ENCODE measurements at regions of chr20 and their contacts with region 1.

Region 1: DNA sequence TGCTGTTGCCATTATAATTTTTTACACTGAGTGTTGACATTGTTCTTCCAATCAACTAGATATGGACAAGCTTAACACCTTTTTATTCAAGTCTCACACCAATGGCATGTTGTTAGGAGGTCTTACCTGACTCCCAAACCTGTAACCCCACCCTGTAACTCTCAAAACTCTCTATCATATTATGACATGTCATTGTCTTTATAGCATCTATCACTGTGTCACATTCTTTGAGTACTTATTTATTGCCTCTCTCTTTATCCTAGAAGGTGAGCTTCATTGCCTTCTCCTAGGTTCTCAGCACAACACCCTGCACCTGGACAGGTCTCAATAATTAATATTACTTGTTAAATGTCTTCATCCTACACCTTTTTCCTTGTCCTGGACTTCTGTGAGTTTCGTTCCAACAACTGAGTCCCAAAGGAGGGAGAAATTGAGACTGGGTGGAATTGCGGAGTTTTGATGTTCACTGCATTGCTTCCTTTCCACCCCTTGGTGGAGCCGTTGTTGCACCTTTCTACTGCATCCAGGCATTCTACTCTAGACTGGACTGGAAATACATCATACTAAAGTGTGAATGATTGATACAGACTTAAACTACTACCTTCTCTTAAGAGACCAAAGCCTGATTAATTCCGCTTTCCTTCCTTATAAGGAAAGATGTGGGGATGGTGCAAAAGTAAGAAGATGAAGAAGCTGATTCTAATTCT is 338.0 kb upstream of the CHD6 start:
- DNase-seq: peak; percentile 7
- ATAC-seq: no peak
- H3K4me3 Mint-ChIP-seq: no peak overlapping the region
- H3K27ac Mint-ChIP-seq: no peak overlapping the region
- H3K4me1 Mint-ChIP-seq: no peaks in the 10 kb centered on the region
- H3K27me3 Mint-ChIP-seq: peaks cover 7% of the 10 kb centered on the region

Region 2: DNA sequence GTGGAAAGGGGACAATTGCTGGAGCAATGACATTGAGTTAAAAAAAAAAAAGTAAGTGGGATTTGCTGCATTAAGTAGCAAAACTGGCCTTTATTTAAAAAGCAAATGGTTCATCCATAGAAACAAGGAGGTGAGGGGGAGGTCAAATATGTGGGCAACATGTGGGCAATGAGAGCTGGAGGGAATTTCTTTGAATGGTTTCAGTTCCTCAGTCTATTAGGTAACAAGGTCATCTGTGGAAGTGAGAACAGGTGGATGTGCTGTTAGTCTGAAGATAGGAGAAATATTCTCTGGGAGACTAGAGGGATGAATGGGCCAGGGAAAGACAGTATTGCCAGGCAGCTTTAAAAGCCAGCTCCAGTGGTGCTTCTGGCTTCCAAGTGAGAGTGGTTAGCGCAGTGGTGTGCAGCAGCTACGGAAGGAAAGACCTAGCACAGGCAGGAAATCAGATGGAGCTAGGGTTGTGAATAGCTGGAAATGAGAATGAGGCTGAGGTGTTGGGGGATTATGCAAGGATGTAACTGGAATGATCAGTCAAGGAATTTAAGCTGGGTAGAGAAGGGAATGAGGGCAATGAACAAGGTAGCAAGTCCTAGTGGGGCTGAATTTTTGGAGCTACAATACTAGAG is 505.9 kb after region 1 on chr20:
- CTCF ChIA-PET with region 1: no interaction called
- POLR2A ChIA-PET with region 1: no interaction called
- intact Hi-C with region 1: no loop called
- DNase-seq: no peak
- ATAC-seq: no peak
- H3K4me3 Mint-ChIP-seq: no peak overlapping the region
- H3K27ac Mint-ChIP-seq: no peak overlapping the region
- H3K4me1 Mint-ChIP-seq: no peaks in the 10 kb centered on the region
- H3K27me3 Mint-ChIP-seq: peaks cover 5% of the 10 kb centered on the region

Region 3: GRCh38 chr20:42530822-42531448 is 574.8 kb after region 1 on chr20:
- CTCF ChIA-PET with region 1: no interaction called
- POLR2A ChIA-PET with region 1: no interaction called
- intact Hi-C with region 1: loop called in 1 of 2 experiments (anchors 5 kb)
- DNase-seq: peak; percentile 8
- ATAC-seq: no peak
- H3K4me3 Mint-ChIP-seq: no peak overlapping the region
- H3K27ac Mint-ChIP-seq: no peak overlapping the region
- H3K4me1 Mint-ChIP-seq: no peaks in the 10 kb centered on the region
- H3K27me3 Mint-ChIP-seq: peaks cover 6% of the 10 kb centered on the region

Region 4: GRCh38 chr20:42749556-42749955 is 793.4 kb after region 1 on chr20:
- CTCF ChIA-PET with region 1: no interaction called
- POLR2A ChIA-PET with region 1: no interaction called
- intact Hi-C with region 1: no loop called
- DNase-seq: no peak
- ATAC-seq: no peak
- H3K4me3 Mint-ChIP-seq: no peak overlapping the region
- H3K27ac Mint-ChIP-seq: no peak overlapping the region
- H3K4me1 Mint-ChIP-seq: no peaks in the 10 kb centered on the region
- H3K27me3 Mint-ChIP-seq: no peaks in the 10 kb centered on the region

Region 5: DNA sequence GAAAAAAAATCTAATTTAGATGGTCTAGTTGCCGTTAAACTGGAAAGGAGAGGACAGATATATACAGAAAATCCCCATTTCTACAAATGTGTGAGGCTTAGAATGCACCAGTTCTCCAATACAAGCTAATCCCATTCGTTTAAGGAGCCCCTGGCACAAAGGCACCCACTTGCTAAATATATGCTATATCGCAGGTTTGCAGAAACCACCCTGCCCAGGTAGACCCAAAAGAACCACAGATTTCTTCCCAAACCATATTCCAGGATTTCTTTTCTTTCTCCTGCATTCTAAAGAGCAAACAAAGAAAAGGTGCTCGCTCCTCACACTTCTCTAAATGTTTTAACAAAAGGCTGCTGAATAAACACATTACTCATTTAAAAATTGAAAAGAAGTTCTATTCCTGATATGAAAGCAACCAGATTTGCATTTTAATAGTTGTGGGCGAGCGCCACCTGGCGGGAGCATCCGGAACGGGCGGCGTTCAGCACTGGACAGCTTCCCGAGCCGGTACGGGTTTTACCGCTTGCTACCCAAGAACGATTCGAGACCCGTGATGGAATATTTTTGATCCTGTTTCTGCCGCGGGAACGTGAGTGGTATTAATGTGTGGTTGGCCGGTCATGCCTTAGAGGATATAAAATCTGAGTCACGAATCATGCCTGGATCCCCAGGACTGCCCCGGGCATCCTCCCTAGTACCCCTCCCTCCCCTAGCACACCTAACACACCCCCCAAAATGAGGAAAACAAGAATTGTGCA is 1231.5 kb after region 1 on chr20:
- CTCF ChIA-PET with region 1: no interaction called
- POLR2A ChIA-PET with region 1: no interaction called
- intact Hi-C with region 1: loop called (anchors 1 to 10 kb)
- DNase-seq: peak; percentile 83
- ATAC-seq: peak; percentile 42
- H3K4me3 Mint-ChIP-seq: no peak overlapping the region
- H3K27ac Mint-ChIP-seq: no peak overlapping the region
- H3K4me1 Mint-ChIP-seq: peaks cover 4% of the 10 kb centered on the region
- H3K27me3 Mint-ChIP-seq: peaks cover 43% of the 10 kb centered on the region

Region 6: DNA sequence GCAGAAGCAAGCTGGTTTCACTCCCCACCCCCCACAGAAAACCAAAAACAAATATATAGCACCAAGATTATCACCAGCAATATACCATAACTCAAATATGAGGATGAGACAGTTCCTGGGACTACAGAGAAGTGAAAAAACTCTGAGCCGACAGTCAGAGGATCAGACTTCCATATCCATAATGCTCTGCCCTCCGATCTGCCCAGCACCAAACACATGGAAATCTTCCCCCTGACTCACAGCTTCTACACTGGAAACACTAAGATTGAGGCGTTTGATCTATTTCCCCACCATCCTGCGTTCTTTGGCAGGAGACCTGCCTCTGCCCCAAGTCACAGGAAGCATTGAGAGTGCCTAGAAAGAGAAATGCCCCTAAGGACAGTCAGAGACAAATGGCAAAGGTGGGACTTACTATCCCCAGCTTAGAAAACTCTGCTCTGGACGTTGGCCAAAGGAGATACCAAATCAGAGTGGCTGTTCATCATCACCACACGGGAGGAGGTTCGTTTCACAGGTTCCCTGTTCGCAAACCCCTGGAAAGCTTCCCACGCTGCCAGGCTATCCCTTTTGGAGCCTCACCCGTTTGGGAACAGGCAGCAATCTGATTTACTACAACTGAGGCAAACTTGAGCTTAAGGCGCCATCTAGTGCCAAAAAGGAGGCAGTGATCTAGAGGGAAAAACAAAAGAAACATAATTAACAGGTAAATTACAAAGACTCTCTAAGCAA is 1452.9 kb after region 1 on chr20:
- CTCF ChIA-PET with region 1: no interaction called
- POLR2A ChIA-PET with region 1: no interaction called
- intact Hi-C with region 1: loop called in 1 of 2 experiments (anchors 10 kb)
- DNase-seq: peak; percentile 25
- ATAC-seq: no peak
- H3K4me3 Mint-ChIP-seq: no peak overlapping the region
- H3K27ac Mint-ChIP-seq: no peak overlapping the region
- H3K4me1 Mint-ChIP-seq: no peaks in the 10 kb centered on the region
- H3K27me3 Mint-ChIP-seq: peaks cover 42% of the 10 kb centered on the region